B cell (primary cell): ENCODE measurements at regions of chr15 and their contacts with region 1.

Region 1: GRCh38 chr15:92954578-92954977 is 54.5 kb downstream of the CHD2 start:
- DNase-seq: no peak
- ATAC-seq: no peak
- H3K4me3 ChIP-seq: no peak overlapping the region
- H3K4me3 Mint-ChIP-seq: no peak overlapping the region
- H3K27ac ChIP-seq: no peak overlapping the region
- H3K27ac Mint-ChIP-seq: no peak overlapping the region
- H3K4me1 ChIP-seq: no peaks in the 10 kb centered on the region
- H3K4me1 Mint-ChIP-seq: peaks cover 11% of the 10 kb centered on the region
- H3K27me3 ChIP-seq: no peaks in the 10 kb centered on the region
- H3K27me3 Mint-ChIP-seq: no peaks in the 10 kb centered on the region
- CTCF ChIP-seq: peak; percentile 36

Region 2: GRCh38 chr15:92917606-92918407 is 36.8 kb before region 1 on chr15:
- CTCF ChIA-PET with region 1: no interaction called
- POLR2A ChIA-PET with region 1: no interaction called
- intact Hi-C with region 1: loop called (anchors 5 kb)
- DNase-seq: peak; percentile 94
- ATAC-seq: peak; percentile 44
- H3K4me3 ChIP-seq: peak overlapping the region in 1 of 5 experiments; percentile 8
- H3K4me3 Mint-ChIP-seq: peak overlapping the region; percentile 74
- H3K27ac ChIP-seq: peak overlapping the region; percentile 83 to 93
- H3K27ac Mint-ChIP-seq: peak overlapping the region; percentile 93
- H3K4me1 ChIP-seq: peaks cover 73 to 77% of the 10 kb centered on the region in 2 donors
- H3K4me1 Mint-ChIP-seq: peaks cover 80% of the 10 kb centered on the region
- H3K27me3 ChIP-seq: no peaks in the 10 kb centered on the region
- H3K27me3 Mint-ChIP-seq: no peaks in the 10 kb centered on the region
- CTCF ChIP-seq: peak; percentile 95

Region 3: GRCh38 chr15:92930054-92930621 is 24.4 kb before region 1 on chr15:
- CTCF ChIA-PET with region 1: no interaction called
- POLR2A ChIA-PET with region 1: no interaction called
- intact Hi-C with region 1: no loop called
- DNase-seq: no peak
- ATAC-seq: no peak
- H3K4me3 ChIP-seq: no peak overlapping the region
- H3K4me3 Mint-ChIP-seq: no peak overlapping the region
- H3K27ac ChIP-seq: no peak overlapping the region
- H3K27ac Mint-ChIP-seq: no peak overlapping the region
- H3K4me1 ChIP-seq: no peaks in the 10 kb centered on the region
- H3K4me1 Mint-ChIP-seq: peaks cover 11% of the 10 kb centered on the region
- H3K27me3 ChIP-seq: no peaks in the 10 kb centered on the region
- H3K27me3 Mint-ChIP-seq: no peaks in the 10 kb centered on the region
- CTCF ChIP-seq: no peak

Region 4: GRCh38 chr15:92989470-92989869 is 34.9 kb after region 1 on chr15:
- CTCF ChIA-PET with region 1: no interaction called
- POLR2A ChIA-PET with region 1: no interaction called
- intact Hi-C with region 1: loop called (anchors 5 kb)
- DNase-seq: no peak
- ATAC-seq: no peak
- H3K4me3 ChIP-seq: no peak overlapping the region
- H3K4me3 Mint-ChIP-seq: no peak overlapping the region
- H3K27ac ChIP-seq: no peak overlapping the region
- H3K27ac Mint-ChIP-seq: peak overlapping the region; percentile 21
- H3K4me1 ChIP-seq: peaks cover 0 to 11% of the 10 kb centered on the region in 2 donors
- H3K4me1 Mint-ChIP-seq: peaks cover 11% of the 10 kb centered on the region
- H3K27me3 ChIP-seq: no peaks in the 10 kb centered on the region
- H3K27me3 Mint-ChIP-seq: no peaks in the 10 kb centered on the region
- CTCF ChIP-seq: no peak